Heart left ventricle (tissue), 16 donors: ENCODE measurements at regions of chr11 and their contacts with region 1.

Region 1: GRCh38 chr11:110907629-110908028 is 195.4 kb upstream of the ARHGAP20 start:
- DNase-seq: no peak
- ATAC-seq: no peak
- H3K4me3 ChIP-seq: no peak overlapping the region
- H3K27ac ChIP-seq: peak overlapping the region in 1 of 12 donors; percentile 10
- H3K4me1 ChIP-seq: peaks cover 0 to 18% (median 0%) of the 10 kb centered on the region in 12 donors
- H3K27me3 ChIP-seq: peaks cover 0 to 3% (median 0%) of the 10 kb centered on the region in 9 donors
- CTCF ChIP-seq: no peak
- POLR2A ChIP-seq: no peak

Region 2: GRCh38 chr11:110447897-110448745 is 459.5 kb before region 1 on chr11:
- intact Hi-C with region 1: no loop called
- DNase-seq: no peak
- ATAC-seq: no peak
- H3K4me3 ChIP-seq: no peak overlapping the region
- H3K27ac ChIP-seq: no peak overlapping the region
- H3K4me1 ChIP-seq: peaks cover 0 to 13% (median 0%) of the 10 kb centered on the region in 12 donors
- H3K27me3 ChIP-seq: no peaks in the 10 kb centered on the region
- CTCF ChIP-seq: peak; percentile 12 to 55 (median 28)
- POLR2A ChIP-seq: no peak

Region 3: DNA sequence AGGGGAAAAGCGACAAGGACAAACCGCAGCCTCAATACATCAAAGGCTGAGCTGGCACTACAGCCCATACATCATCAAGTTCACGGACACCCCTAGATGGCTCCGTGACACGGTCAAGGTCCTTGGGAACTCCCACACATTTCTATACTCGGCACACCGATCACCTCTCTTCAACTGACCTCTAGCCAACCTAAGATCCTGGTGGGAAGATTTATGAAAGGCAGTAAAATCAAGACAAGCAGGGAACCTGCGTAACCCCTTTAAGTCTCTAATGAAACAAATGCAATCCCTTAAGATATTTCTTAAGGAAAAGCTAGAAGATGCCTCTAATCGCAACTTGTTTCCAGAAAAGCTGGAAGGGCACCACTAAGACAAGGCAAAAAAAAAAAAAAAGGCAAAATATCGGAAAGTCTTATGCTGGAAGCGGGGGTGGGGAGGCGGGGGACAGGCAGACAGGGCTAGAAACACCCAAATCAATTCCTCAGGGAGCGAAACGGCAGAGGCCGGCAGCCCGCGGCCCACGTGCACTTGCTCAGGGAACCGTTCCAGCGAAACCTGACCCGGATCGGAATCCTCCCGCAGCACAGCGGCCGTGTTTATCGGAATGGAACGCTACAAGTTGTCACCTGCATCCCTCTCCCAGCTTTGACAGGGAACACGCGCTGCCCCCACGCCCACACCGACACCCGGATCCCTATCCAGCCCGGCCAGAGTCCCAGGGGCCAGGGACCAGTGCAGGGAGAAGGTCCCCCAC is 196.8 kb before region 1 on chr11:
- intact Hi-C with region 1: no loop called
- DNase-seq: peak; percentile 15 to 45 (median 24)
- ATAC-seq: no peak
- H3K4me3 ChIP-seq: peak overlapping the region; percentile 37 to 65 (median 59)
- H3K27ac ChIP-seq: no peak overlapping the region
- H3K4me1 ChIP-seq: peaks cover 0 to 29% (median 14%) of the 10 kb centered on the region in 12 donors
- H3K27me3 ChIP-seq: peaks cover 3 to 59% (median 26%) of the 10 kb centered on the region in 9 donors
- CTCF ChIP-seq: no peak
- POLR2A ChIP-seq: no peak

Region 4: GRCh38 chr11:110855191-110855590 is 52.4 kb before region 1 on chr11:
- intact Hi-C with region 1: no loop called
- DNase-seq: no peak
- ATAC-seq: no peak
- H3K4me3 ChIP-seq: no peak overlapping the region
- H3K27ac ChIP-seq: no peak overlapping the region
- H3K4me1 ChIP-seq: peaks cover 0 to 15% (median 0%) of the 10 kb centered on the region in 12 donors
- H3K27me3 ChIP-seq: no peaks in the 10 kb centered on the region
- CTCF ChIP-seq: no peak
- POLR2A ChIP-seq: no peak

Region 5: GRCh38 chr11:110968348-110969062 is 60.9 kb after region 1 on chr11:
- intact Hi-C with region 1: loop called in 1 of 10 experiments (anchors 10 kb)
- DNase-seq: no peak
- ATAC-seq: no peak
- H3K4me3 ChIP-seq: no peak overlapping the region
- H3K27ac ChIP-seq: no peak overlapping the region
- H3K4me1 ChIP-seq: peaks cover 0 to 14% (median 0%) of the 10 kb centered on the region in 12 donors
- H3K27me3 ChIP-seq: no peaks in the 10 kb centered on the region
- CTCF ChIP-seq: no peak
- POLR2A ChIP-seq: no peak